Caco-2 (cell line): ENCODE measurements at regions of chr2 and their contacts with region 1.

Region 1: GRCh38 chr2:120934574-120935340 is 199.1 kb downstream of the GLI2 start:
- DNase-seq: peak; percentile 56 to 69
- H3K4me3 ChIP-seq: no peak overlapping the region
- H3K4me3 Mint-ChIP-seq: peak overlapping the region; percentile 68
- H3K27ac Mint-ChIP-seq: peak overlapping the region; percentile 92
- H3K4me1 ChIP-seq: peaks cover 67% of the 10 kb centered on the region
- H3K4me1 Mint-ChIP-seq: peaks cover 57% of the 10 kb centered on the region
- H3K27me3 ChIP-seq: no peaks in the 10 kb centered on the region
- H3K27me3 Mint-ChIP-seq: no peaks in the 10 kb centered on the region
- CTCF ChIP-seq: no peak

Region 2: GRCh38 chr2:120879431-120880295 is 55.1 kb before region 1 on chr2:
- CTCF ChIA-PET with region 1: no interaction called
- POLR2A ChIA-PET with region 1: no interaction called
- intact Hi-C with region 1: loop called (anchors 5 kb)
- DNase-seq: peak in 1 of 2 experiments; percentile 46
- H3K4me3 ChIP-seq: no peak overlapping the region
- H3K4me3 Mint-ChIP-seq: peak overlapping the region; percentile 67
- H3K27ac Mint-ChIP-seq: no peak overlapping the region
- H3K4me1 ChIP-seq: no peaks in the 10 kb centered on the region
- H3K4me1 Mint-ChIP-seq: no peaks in the 10 kb centered on the region
- H3K27me3 ChIP-seq: no peaks in the 10 kb centered on the region
- H3K27me3 Mint-ChIP-seq: no peaks in the 10 kb centered on the region
- CTCF ChIP-seq: peak; percentile 23 to 42

Region 3: GRCh38 chr2:121018136-121019061 is 83.6 kb after region 1 on chr2:
- CTCF ChIA-PET with region 1: no interaction called
- POLR2A ChIA-PET with region 1: no interaction called
- intact Hi-C with region 1: loop called (anchors 5 kb)
- DNase-seq: no peak
- H3K4me3 ChIP-seq: no peak overlapping the region
- H3K4me3 Mint-ChIP-seq: no peak overlapping the region
- H3K27ac Mint-ChIP-seq: no peak overlapping the region
- H3K4me1 ChIP-seq: peaks cover 4% of the 10 kb centered on the region
- H3K4me1 Mint-ChIP-seq: peaks cover 22% of the 10 kb centered on the region
- H3K27me3 ChIP-seq: no peaks in the 10 kb centered on the region
- H3K27me3 Mint-ChIP-seq: no peaks in the 10 kb centered on the region
- CTCF ChIP-seq: no peak

Region 4: GRCh38 chr2:121071034-121071504 is 136.3 kb after region 1 on chr2:
- CTCF ChIA-PET with region 1: interaction called, 3 read pairs
- POLR2A ChIA-PET with region 1: interaction called, 12 read pairs
- intact Hi-C with region 1: loop called (anchors 5 kb)
- DNase-seq: peak; percentile 71 to 88
- H3K4me3 ChIP-seq: no peak overlapping the region
- H3K4me3 Mint-ChIP-seq: no peak overlapping the region
- H3K27ac Mint-ChIP-seq: no peak overlapping the region
- H3K4me1 ChIP-seq: peaks cover 12% of the 10 kb centered on the region
- H3K4me1 Mint-ChIP-seq: no peaks in the 10 kb centered on the region
- H3K27me3 ChIP-seq: no peaks in the 10 kb centered on the region
- H3K27me3 Mint-ChIP-seq: peaks cover 3% of the 10 kb centered on the region
- CTCF ChIP-seq: peak; percentile 95 to 96

Region 5: GRCh38 chr2:121112587-121112986 is 177.8 kb after region 1 on chr2:
- CTCF ChIA-PET with region 1: no interaction called
- POLR2A ChIA-PET with region 1: no interaction called
- intact Hi-C with region 1: no loop called
- DNase-seq: no peak
- H3K4me3 ChIP-seq: no peak overlapping the region
- H3K4me3 Mint-ChIP-seq: no peak overlapping the region
- H3K27ac Mint-ChIP-seq: no peak overlapping the region
- H3K4me1 ChIP-seq: peaks cover 7% of the 10 kb centered on the region; the same call in 1 of the 2 replicates
- H3K4me1 Mint-ChIP-seq: peaks cover 13% of the 10 kb centered on the region
- H3K27me3 ChIP-seq: no peaks in the 10 kb centered on the region
- H3K27me3 Mint-ChIP-seq: no peaks in the 10 kb centered on the region
- CTCF ChIP-seq: no peak